ENCODE measurements at regions of chr4 and their contacts with region 1.

Region 1: DNA sequence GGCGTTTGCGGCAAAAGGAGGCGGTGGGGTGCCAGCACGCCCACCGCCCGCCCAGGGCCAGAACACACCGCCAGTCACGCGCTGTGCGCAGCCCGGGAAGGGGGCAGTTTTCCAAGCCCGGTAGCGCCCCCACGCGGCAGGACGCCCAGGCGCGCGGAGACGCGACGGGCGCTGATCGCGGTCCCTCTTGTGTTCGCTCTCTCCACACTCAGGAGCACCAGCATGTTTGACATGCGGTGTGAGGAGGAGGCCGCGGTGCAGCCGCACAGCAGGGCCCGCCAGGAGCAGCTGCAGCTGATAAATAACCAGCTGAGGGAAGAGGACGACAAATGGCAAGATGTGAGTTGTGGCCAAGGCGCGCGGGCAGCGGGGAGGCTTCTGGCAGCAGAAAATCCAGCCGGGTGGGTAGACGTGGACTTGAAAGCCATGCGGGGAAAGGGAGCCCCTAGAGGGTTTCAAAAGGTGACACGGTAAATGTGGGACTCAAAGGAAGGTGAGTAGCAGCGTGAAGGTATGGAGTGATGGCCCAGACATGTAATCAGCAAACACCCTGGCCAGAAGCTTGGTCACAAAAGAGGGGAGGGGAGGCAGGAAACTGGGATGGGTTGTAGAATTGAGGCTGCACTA is 104.1 kb downstream of the PHOX2B start:
- DNase-seq: peak; percentile 75
- H3K4me3 ChIP-seq: peak overlapping the region in 1 of 2 experiments; percentile 46; a peak in 1 of 4 replicates
- H3K27ac ChIP-seq: no peak overlapping the region
- H3K4me1 ChIP-seq: peaks cover 0 to 13% of the 10 kb centered on the region in 2 experiments; a peak in 1 of 4 replicates
- H3K27me3 ChIP-seq: no peaks in the 10 kb centered on the region
- CTCF ChIP-seq: peak; percentile 47
- EP300 ChIP-seq: no peak
- RAD21 ChIP-seq: peak; percentile 65

Region 2: GRCh38 chr4:41281038-41281634 is 363.3 kb before region 1 on chr4:
- CTCF ChIA-PET with region 1: interaction called, 36 read pairs
- POLR2A ChIA-PET with region 1: no interaction called
- DNase-seq: peak; percentile 84
- H3K4me3 ChIP-seq: no peak overlapping the region
- H3K27ac ChIP-seq: no peak overlapping the region
- H3K4me1 ChIP-seq: no peaks in the 10 kb centered on the region; a peak in 1 of 4 replicates
- H3K27me3 ChIP-seq: no peaks in the 10 kb centered on the region
- CTCF ChIP-seq: peak; percentile 90
- EP300 ChIP-seq: no peak
- RAD21 ChIP-seq: peak; percentile 100

Region 3: DNA sequence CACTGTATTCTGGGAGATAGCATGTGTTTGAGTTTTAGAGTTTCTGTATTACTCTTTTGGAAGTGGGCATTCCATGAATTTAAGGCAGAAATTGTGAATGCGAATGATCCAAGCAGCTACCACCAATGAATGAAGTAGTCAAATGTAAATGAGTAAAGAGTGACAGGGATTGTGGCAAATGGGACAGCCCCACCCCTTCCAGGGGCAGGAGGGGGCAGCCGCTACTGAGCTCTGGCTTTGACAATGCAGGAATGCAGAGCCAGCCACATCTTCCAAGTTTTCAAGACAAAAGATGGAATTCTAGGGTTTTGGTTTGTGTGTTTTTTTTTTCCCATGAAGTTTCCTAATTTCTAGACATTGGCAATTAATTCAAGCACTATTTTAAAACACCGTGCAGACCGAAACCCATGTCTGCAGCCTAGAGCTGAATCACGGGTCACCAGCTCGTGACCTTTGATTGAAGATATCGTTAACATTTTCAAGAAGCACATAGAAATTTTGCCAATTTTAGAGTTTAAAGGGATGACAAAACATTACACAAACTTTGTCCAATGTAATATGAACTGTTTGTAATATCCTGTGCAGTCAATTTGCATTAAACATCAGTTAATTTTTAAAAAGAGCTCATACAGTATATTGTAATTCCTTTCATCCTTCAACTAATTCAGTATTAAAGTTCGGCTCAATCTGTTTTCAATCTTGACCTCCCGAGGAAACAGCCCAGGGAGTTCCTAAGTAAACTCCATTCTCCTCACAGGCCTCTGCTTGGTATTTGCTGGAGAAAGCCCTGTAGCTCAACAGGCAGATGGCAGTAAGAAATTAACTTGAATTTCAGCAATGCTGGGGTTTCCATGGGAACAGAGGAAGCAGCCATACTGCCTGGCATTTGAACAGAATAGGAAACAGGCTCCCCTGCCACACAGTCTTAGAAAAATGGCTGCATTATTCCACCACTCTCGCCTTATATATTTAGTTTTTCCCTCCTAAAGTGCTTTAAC is 304.3 kb before region 1 on chr4:
- CTCF ChIA-PET with region 1: interaction called, 14 read pairs
- POLR2A ChIA-PET with region 1: no interaction called
- DNase-seq: peak; percentile 70
- H3K4me3 ChIP-seq: no peak overlapping the region
- H3K27ac ChIP-seq: peak overlapping the region; percentile 47 to 60
- H3K4me1 ChIP-seq: peaks cover 0 to 4% of the 10 kb centered on the region in 2 experiments; a peak in 2 of 4 replicates
- H3K27me3 ChIP-seq: no peaks in the 10 kb centered on the region
- CTCF ChIP-seq: peak; percentile 15; the same call in 1 of the 2 replicates
- EP300 ChIP-seq: peak in 1 of 2 experiments; percentile 32; a peak in 1 of 4 replicates
- RAD21 ChIP-seq: peak; percentile 83

Region 4: GRCh38 chr4:41360214-41360920 is 284.0 kb before region 1 on chr4:
- CTCF ChIA-PET with region 1: interaction called, 11 read pairs
- POLR2A ChIA-PET with region 1: no interaction called
- DNase-seq: peak; percentile 90
- H3K4me3 ChIP-seq: peak overlapping the region; percentile 62 to 65
- H3K27ac ChIP-seq: peak overlapping the region in 1 of 2 experiments; percentile 97; a peak in 2 of 4 replicates
- H3K4me1 ChIP-seq: peaks cover 0 to 39% of the 10 kb centered on the region in 2 experiments; a peak in 2 of 4 replicates
- H3K27me3 ChIP-seq: peaks cover 23% of the 10 kb centered on the region; the same call in 1 of the 2 replicates
- CTCF ChIP-seq: no peak
- EP300 ChIP-seq: no peak
- RAD21 ChIP-seq: no peak

Region 5: GRCh38 chr4:41620594-41621256 is 23.7 kb before region 1 on chr4:
- CTCF ChIA-PET with region 1: interaction called, 12 read pairs
- POLR2A ChIA-PET with region 1: no interaction called
- DNase-seq: peak; percentile 45
- H3K4me3 ChIP-seq: no peak overlapping the region
- H3K27ac ChIP-seq: peak overlapping the region in 1 of 2 experiments; percentile 69; a peak in 2 of 4 replicates
- H3K4me1 ChIP-seq: peaks cover 0 to 16% of the 10 kb centered on the region in 2 experiments; a peak in 2 of 4 replicates
- H3K27me3 ChIP-seq: no peaks in the 10 kb centered on the region
- CTCF ChIP-seq: no peak
- EP300 ChIP-seq: no peak
- RAD21 ChIP-seq: no peak

Region 6: GRCh38 chr4:41718907-41719306 is 74.5 kb after region 1 on chr4:
- CTCF ChIA-PET with region 1: no interaction called
- POLR2A ChIA-PET with region 1: no interaction called
- DNase-seq: no peak
- H3K4me3 ChIP-seq: no peak overlapping the region
- H3K27ac ChIP-seq: peak overlapping the region in 1 of 2 experiments; percentile 50; a peak in 2 of 4 replicates
- H3K4me1 ChIP-seq: no peaks in the 10 kb centered on the region; a peak in 2 of 4 replicates
- H3K27me3 ChIP-seq: no peaks in the 10 kb centered on the region
- CTCF ChIP-seq: no peak
- EP300 ChIP-seq: no peak
- RAD21 ChIP-seq: no peak